Mammary epithelial cell (primary cell): ENCODE measurements at regions of chr2 and their contacts with region 1.

Region 1: GRCh38 chr2:233976690-233977294 is 59.6 kb downstream of the TRPM8 start:
- DNase-seq: peak; percentile 70
- H3K4me3 ChIP-seq: no peak overlapping the region
- H3K27ac ChIP-seq: no peak overlapping the region
- H3K4me1 ChIP-seq: peaks cover 61% of the 10 kb centered on the region
- H3K27me3 ChIP-seq: no peaks in the 10 kb centered on the region
- CTCF ChIP-seq: peak; percentile 60 to 64

Region 2: DNA sequence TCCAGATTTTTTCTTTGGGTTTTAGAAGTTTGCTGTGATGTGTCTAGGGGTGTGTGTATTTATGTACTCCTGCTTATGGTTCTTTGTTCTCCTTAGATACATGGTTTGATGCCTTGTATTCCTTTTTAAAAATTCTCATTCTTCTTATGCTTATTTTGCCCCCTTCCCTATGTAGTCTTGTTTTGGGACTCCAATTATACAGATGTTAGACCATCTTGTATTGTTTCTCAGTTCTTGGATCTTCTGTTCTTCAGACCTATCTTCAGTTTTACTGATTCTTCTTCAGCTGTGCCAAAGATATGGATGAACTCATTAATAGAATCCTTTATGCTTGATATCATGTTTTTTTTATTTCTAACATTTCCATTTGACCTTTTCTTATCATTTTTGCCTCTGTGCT is 94.4 kb before region 1 on chr2:
- CTCF ChIA-PET with region 1: no interaction called
- dilution Hi-C with region 1: no loop called
- in situ Hi-C with region 1: no loop called
- intact Hi-C with region 1: no loop called
- DNase-seq: no peak
- H3K4me3 ChIP-seq: no peak overlapping the region
- H3K27ac ChIP-seq: no peak overlapping the region
- H3K4me1 ChIP-seq: no peaks in the 10 kb centered on the region
- H3K27me3 ChIP-seq: no peaks in the 10 kb centered on the region
- CTCF ChIP-seq: no peak

Region 3: GRCh38 chr2:234019888-234020287 is 43.1 kb after region 1 on chr2:
- CTCF ChIA-PET with region 1: no interaction called
- dilution Hi-C with region 1: loop called (anchors 5 kb)
- in situ Hi-C with region 1: no loop called
- intact Hi-C with region 1: no loop called
- DNase-seq: no peak
- H3K4me3 ChIP-seq: no peak overlapping the region
- H3K27ac ChIP-seq: no peak overlapping the region
- H3K4me1 ChIP-seq: no peaks in the 10 kb centered on the region
- H3K27me3 ChIP-seq: no peaks in the 10 kb centered on the region
- CTCF ChIP-seq: no peak

Region 4: GRCh38 chr2:234257856-234258561 is 281.2 kb after region 1 on chr2:
- CTCF ChIA-PET with region 1: no interaction called
- dilution Hi-C with region 1: no loop called
- in situ Hi-C with region 1: loop called (anchors 10 kb)
- intact Hi-C with region 1: loop called (anchors 1 kb)
- DNase-seq: peak; percentile 99
- H3K4me3 ChIP-seq: no peak overlapping the region
- H3K27ac ChIP-seq: peak overlapping the region; percentile 99
- H3K4me1 ChIP-seq: peaks cover 76% of the 10 kb centered on the region
- H3K27me3 ChIP-seq: no peaks in the 10 kb centered on the region
- CTCF ChIP-seq: peak; percentile 82 to 83

Region 5: DNA sequence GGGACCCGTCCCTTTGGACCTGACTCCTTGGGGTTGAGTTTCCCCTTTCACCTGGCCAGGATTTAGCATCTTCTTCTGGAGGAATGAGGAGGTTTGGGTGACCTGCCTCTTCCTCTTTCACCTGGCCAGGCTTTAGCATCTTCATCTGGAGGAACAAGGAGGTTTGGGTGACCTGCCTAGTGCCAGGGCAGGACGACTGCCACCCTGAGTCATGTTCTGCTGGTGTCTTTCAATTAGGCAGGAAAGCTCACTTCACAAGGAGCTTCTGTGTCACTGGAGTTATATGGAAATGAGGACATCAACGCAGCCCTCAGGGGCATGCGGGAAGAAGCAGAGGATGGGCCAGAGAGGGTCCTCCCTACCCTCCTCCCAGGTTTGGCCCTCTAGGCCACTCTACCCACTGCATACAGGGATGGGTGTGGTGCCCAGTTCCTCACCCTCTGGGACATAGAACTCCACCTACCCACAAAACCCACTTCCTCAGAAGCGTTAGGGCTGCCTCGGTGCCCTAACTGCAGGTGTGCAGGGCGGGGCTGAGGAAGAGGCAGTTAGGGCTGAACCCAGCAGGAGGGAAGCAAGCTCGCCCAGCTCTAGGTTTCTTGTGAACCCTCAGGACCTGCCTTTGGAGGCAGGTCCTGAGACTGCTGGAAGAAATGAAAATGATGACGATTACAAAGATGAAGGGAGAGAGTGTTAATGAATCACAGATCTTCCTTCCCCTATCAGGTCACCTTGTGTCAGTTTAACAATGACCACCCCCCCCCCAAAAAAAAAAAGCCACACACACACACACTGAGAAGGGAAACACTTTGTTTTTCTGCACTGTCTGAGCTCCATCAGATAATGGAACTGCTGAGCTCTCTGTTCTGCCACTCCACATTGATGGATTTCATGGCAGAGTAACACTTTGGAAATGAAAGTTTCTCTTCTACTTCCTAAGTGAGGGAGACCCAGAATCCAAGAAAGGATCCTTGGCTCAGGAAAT is 449.1 kb after region 1 on chr2:
- CTCF ChIA-PET with region 1: no interaction called
- dilution Hi-C with region 1: no loop called
- in situ Hi-C with region 1: no loop called
- intact Hi-C with region 1: loop called (anchors 10 kb)
- DNase-seq: peak; percentile 68
- H3K4me3 ChIP-seq: no peak overlapping the region
- H3K27ac ChIP-seq: no peak overlapping the region
- H3K4me1 ChIP-seq: peaks cover 48% of the 10 kb centered on the region
- H3K27me3 ChIP-seq: no peaks in the 10 kb centered on the region
- CTCF ChIP-seq: no peak

Region 6: GRCh38 chr2:235106874-235107639 is 1130.3 kb after region 1 on chr2:
- CTCF ChIA-PET with region 1: no interaction called
- dilution Hi-C with region 1: loop called (anchors 25 kb)
- in situ Hi-C with region 1: loop called in 1 of 2 experiments (anchors 25 kb)
- intact Hi-C with region 1: no loop called
- DNase-seq: peak; percentile 52
- H3K4me3 ChIP-seq: no peak overlapping the region
- H3K27ac ChIP-seq: no peak overlapping the region
- H3K4me1 ChIP-seq: no peaks in the 10 kb centered on the region
- H3K27me3 ChIP-seq: peaks cover 4% of the 10 kb centered on the region
- CTCF ChIP-seq: peak; percentile 58 to 90